ENCODE measurements at regions of chr1 and their contacts with region 1.

Region 1: DNA sequence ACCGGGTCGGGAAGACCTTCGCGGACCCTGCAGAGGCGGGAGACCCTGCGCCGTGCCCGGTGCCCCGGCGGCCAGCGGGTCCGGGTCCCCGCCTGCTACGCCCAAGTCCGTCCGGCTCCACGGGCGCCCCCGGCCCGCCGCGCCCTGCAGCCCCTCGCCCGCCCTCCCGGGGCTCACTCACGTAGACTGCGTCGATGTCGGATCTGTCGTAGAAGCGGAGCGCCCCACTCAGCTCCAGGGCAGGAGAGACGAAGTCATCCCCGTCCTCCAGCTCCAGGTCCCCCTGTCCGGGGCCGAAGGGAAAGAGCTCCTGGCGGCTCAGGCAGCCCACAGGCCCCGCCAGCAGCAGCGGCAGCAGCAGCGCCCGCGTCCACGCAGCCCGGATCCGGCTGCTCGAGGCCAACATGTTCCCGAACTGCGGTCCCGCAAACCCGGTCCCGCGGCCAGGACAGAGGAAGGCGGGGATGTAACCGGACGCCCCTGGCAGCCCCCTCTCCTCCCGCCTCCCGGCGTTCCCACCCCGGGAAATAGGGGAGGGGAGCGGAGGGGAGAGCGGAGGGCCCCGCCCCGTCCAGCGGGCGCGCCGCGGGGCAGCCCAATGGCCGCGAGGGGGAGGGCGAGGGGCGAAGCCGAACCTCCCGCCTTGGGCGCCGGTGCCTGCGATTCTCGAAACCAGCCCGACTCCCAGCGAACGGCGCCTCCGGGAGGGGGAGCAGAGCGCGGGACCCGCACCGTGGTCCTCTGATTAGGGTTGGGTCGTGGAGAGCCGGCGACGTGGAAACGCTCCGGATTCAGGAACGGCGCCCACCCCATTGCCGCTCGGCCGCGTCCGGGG is at the start of gene NID1:
- DNase-seq: no peak
- H3K4me3 ChIP-seq: peak within 1 kb of the TSS; percentile 72
- CTCF ChIP-seq: peak; percentile 37

Region 2: GRCh38 chr1:236051242-236051791 is 13.6 kb before region 1 on chr1:
- CTCF ChIA-PET with region 1: interaction called, 13 read pairs
- POLR2A ChIA-PET with region 1: no interaction called
- DNase-seq: no peak
- H3K4me3 ChIP-seq: no peak overlapping the region
- CTCF ChIP-seq: no peak

Region 3: GRCh38 chr1:236159704-236160539 is 95.0 kb after region 1 on chr1:
- CTCF ChIA-PET with region 1: no interaction called
- POLR2A ChIA-PET with region 1: no interaction called
- DNase-seq: no peak
- H3K4me3 ChIP-seq: no peak overlapping the region
- CTCF ChIP-seq: no peak

Measured in AG04449 (cell line).